Gastrocnemius medialis (tissue), 4 donors: ENCODE measurements at regions of chr1 and their contacts with region 1.

Region 1: DNA sequence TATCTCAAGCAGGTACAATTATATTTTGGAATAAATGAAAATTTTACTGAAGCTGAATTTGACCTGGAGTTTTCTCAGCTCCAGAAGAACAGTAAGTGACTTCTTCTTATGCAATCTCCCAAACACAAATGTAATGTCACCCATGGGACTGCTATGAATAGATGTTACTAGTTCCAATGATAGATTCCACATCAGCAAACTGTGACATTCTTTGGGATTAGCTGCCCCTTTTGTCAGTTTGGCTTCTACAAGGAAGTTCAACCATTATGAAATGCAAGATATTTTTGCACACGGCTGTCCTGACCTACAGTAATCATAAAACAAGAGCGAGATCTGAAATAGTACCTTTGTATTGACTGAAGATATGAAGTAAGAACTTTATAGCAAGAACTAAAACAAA is 27.8 kb upstream of the TSNAX start:
- DNase-seq: peak; percentile 56 to 69
- ATAC-seq: peak; percentile 99 to 100
- H3K4me3 ChIP-seq: peak overlapping the region in 1 of 4 donors; percentile 9
- H3K27ac ChIP-seq: peak overlapping the region; percentile 87 to 95 (median 90)
- H3K4me1 ChIP-seq: peaks cover 12 to 22% of the 10 kb centered on the region in 2 donors
- H3K27me3 ChIP-seq: no peaks in the 10 kb centered on the region
- CTCF ChIP-seq: no peak
- POLR2A ChIP-seq: peak in 1 of 2 donors; percentile 40

Region 2: GRCh38 chr1:231487019-231487418 is 13.6 kb before region 1 on chr1:
- in situ Hi-C with region 1: no loop called
- intact Hi-C with region 1: no loop called
- DNase-seq: no peak
- ATAC-seq: no peak
- H3K4me3 ChIP-seq: no peak overlapping the region
- H3K27ac ChIP-seq: no peak overlapping the region
- H3K4me1 ChIP-seq: peaks cover 0 to 7% of the 10 kb centered on the region in 2 donors
- H3K27me3 ChIP-seq: no peaks in the 10 kb centered on the region
- CTCF ChIP-seq: no peak
- POLR2A ChIP-seq: no peak

Region 3: GRCh38 chr1:231528172-231529029 is 27.7 kb after region 1 on chr1 and contains the start of gene TSNAX:
- in situ Hi-C with region 1: no loop called
- intact Hi-C with region 1: loop called (anchors 1 kb)
- DNase-seq: peak; percentile 84 to 90
- ATAC-seq: peak; percentile 90 to 96
- H3K4me3 ChIP-seq: peak within 1 kb of the TSS; percentile 70 to 93 (median 80)
- H3K27ac ChIP-seq: peak within 1 kb of the TSS; percentile 94 to 99 (median 96)
- H3K4me1 ChIP-seq: peaks cover 18 to 49% of the 10 kb centered on the region in 2 donors
- H3K27me3 ChIP-seq: no peaks in the 10 kb centered on the region
- CTCF ChIP-seq: no peak
- POLR2A ChIP-seq: peak; percentile 95
- total RNA-seq, gene TSNAX: 47.8 to 84.2 (median 77.8) TPM

Region 4: DNA sequence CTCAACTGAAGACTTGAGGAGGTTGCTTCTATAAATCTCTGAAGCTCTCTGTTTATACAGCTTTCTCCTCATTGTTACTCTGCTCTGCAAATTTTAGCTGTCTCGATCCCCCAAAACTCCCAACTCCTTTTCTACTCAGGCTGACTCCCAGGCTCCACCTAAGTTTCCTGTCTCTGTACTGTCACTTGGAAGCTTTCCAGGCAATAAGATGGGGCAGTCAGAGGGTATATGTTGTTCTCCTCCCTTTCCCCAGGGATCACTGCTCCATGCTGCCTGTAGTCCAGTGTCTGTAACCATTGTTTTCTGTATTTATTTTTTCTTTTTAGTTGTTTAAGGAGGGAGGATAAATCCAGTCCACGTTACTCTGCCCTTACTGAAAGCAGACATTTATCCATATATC is 41.2 kb after region 1 on chr1:
- in situ Hi-C with region 1: no loop called
- intact Hi-C with region 1: no loop called
- DNase-seq: no peak
- ATAC-seq: peak in 1 of 2 donors; percentile 26
- H3K4me3 ChIP-seq: no peak overlapping the region
- H3K27ac ChIP-seq: peak overlapping the region; percentile 39 to 53 (median 45)
- H3K4me1 ChIP-seq: peaks cover 14 to 36% of the 10 kb centered on the region in 2 donors
- H3K27me3 ChIP-seq: no peaks in the 10 kb centered on the region
- CTCF ChIP-seq: no peak
- POLR2A ChIP-seq: no peak